ENCODE measurements at regions of chr11 and their contacts with region 1.

Region 1: DNA sequence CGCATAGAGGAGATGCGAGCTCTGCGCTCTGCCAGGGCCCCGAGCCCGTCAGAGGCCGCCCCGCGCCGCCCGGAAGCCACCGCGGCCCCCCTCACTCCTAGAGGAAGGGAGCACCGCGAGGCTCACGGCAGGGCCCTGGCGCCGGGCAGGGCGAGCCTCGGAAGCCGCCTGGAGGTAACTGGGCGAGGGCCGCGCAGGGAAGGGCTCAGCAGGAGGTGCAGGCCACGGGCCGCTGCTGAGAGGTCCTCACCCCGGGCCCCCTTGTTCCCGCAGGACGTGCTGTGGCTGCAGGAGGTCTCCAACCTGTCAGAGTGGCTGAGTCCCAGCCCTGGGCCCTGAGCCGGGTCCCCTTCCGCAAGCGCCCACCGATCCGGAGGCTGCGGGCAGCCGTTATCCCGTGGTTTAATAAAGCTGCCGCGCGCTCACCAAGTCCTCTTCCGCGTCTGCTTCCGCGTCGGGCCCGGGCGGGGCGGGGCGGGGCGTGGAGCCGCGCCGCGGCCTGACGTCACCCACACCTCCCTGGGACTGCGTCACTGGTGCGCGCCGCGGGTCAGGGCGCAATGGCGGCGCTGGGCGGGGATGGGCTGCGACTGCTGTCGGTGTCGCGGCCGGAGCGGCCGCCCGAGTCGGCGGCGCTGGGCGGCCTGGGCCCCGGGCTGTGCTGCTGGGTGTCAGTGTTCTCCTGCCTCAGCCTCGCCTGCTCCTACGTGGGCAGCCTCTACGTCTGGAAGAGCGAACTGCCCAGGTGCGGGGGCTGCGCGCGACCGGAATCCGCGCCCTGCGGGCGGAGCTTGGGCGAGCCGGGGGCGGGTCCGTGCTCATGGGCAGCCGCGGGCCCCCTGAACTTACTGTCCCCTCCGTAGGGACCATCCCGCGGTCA is at the start of gene RCE1:
- DNase-seq: peak; percentile 91
- H3K4me3 ChIP-seq: peak within 1 kb of the TSS; percentile 82 to 98 (median 91)
- H3K27ac ChIP-seq: peak within 1 kb of the TSS; percentile 97 to 99 (median 99)
- H3K4me1 ChIP-seq: peaks cover 18 to 39% (median 24%) of the 10 kb centered on the region in 4 donors
- H3K27me3 ChIP-seq: no peaks in the 10 kb centered on the region
- CTCF ChIP-seq: no peak
- EP300 ChIP-seq: no peak
- POLR2A ChIP-seq: peak; percentile 94
- total RNA-seq, gene RCE1: 14.5 to 40.3 (median 37.4) TPM

Region 2: DNA sequence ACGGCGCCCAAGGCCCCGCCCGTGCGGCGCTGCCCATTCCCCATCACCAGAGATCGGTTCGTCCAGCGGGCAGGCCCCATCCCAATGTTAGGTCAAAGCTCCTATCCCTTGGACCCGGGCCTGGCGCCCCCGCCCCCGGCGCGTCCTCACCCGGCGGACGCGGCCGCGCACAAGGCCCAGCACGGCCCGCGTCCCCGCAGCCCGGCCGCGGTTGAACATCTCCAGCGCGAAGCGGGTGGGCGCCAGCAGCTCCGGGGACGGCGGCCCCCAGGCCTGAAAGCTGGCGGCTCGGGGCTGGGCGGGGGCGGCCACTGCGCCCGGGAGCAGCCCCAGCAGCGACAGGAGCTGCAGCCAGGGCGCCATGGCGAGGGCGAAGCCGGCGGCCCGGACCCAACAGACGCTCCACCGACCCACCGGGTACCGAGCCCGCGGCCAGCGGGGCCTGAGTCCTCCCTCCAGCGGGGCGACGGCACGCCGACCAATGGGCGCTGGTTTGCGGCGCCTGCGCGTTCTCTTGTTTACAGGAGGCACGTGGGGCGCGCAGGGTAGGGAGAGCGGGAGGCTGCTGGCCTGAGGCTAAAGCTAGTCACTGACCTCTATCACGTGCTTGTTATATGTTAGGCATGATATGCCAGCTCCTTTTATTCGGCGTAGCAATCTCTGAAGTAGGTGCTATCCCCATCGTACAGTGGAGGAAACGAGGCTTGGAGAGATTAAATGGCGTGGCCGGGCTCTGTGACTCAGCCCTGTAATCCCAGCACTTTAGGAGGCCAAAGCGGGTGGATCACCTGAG is 274.8 kb before region 1 on chr11 and contains the start of gene CTSF:
- in situ Hi-C with region 1: loop called in 2 of 4 experiments (anchors 10 to 25 kb)
- intact Hi-C with region 1: no loop called
- DNase-seq: peak; percentile 85
- H3K4me3 ChIP-seq: peak within 1 kb of the TSS; percentile 55 to 72 (median 59)
- H3K27ac ChIP-seq: peak within 1 kb of the TSS in 3 of 4 donors; percentile 28 to 72 (median 53)
- H3K4me1 ChIP-seq: peaks cover 5 to 18% (median 13%) of the 10 kb centered on the region in 4 donors
- H3K27me3 ChIP-seq: peaks cover 17% of the 10 kb centered on the region
- CTCF ChIP-seq: no peak
- EP300 ChIP-seq: no peak
- POLR2A ChIP-seq: no peak
- total RNA-seq, gene CTSF: 23.5 to 80.6 (median 39.0) TPM

Region 3: DNA sequence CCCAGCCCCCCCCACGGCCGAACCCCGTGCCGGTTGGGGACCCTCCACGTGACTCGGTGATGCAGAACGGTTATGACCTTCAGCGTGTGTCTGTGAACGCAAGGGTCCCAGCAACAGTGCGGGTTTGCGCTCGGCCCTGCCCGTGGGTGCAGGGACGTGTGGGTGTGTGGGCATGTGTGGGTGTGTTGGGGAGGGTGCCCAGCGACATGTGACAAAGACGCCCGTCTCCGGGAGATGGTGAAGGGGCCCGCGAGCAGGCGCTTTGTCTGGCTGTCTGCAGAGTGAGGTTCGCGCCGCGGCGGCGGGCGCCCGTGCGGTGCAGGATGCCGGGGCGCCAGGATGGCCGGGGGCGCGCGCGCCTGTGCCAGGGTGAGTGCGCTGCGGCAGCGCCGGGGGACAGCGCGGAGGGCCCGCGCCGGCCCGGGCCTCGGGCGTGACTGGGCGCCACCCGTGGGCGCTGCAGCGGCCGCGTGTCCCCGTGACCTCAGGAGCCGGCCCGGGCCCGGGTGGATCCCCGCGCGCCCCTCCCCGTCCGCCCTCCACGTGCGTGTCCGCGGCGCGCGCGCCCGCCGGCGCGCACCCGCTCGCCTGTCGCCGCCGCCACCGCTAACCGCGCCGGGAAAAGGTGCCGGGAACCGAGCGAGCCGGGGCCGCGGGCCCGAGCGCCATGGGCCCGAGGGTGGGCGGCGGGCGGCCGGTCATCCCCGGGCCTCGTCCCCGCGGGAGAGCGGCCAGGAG is 13.5 kb after region 1 on chr11 and contains the start of gene LRFN4:
- in situ Hi-C with region 1: no loop called
- intact Hi-C with region 1: no loop called
- DNase-seq: peak; percentile 59
- H3K4me3 ChIP-seq: peak within 1 kb of the TSS; percentile 55 to 72 (median 57)
- H3K27ac ChIP-seq: peak within 1 kb of the TSS; percentile 89 to 93 (median 91)
- H3K4me1 ChIP-seq: peaks cover 6 to 17% (median 12%) of the 10 kb centered on the region in 4 donors
- H3K27me3 ChIP-seq: no peaks in the 10 kb centered on the region
- CTCF ChIP-seq: no peak
- EP300 ChIP-seq: no peak
- POLR2A ChIP-seq: no peak
- total RNA-seq, gene LRFN4: 14.3 to 52.3 (median 22.6) TPM

Region 4: DNA sequence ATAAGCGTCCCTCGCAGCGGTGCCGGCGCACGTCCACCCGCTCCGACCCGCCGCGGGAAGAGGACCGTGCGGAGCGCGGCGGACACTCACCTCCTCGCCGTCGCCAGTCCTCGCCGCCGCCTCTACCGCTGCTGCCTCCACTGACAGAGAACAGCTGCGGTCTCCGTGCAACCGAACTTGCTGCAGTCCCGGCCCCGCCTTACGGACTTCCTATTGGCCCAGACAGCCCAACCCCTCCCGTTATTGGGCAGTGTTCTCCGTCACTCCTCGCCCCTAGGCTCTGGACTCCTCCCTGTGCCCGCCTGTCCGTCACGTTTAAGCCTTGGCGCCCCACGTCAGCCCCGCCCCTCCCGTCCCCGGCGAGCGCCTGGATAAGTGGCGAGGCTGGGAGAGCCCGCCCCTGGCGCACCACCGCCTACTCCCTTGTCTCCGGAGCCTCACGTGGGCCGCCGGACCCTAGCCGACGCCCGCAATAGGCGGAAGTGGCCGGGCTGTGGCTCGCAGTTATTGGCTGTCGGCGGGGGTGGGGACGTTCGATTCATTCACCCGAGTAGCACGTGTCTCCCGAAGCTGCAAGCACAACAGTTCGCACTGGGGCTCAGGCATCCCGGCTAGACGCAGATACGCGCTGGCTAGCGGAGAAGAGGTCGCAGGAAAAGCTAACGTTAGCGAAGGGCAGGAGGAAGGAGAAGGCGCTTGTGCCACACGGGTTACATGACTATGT is 115.3 kb after region 1 on chr11 and contains the start of gene PC:
- in situ Hi-C with region 1: no loop called
- intact Hi-C with region 1: no loop called
- DNase-seq: peak; percentile 99
- H3K4me3 ChIP-seq: peak within 1 kb of the TSS; percentile 59 to 83 (median 64)
- H3K27ac ChIP-seq: peak within 1 kb of the TSS; percentile 68 to 91 (median 83)
- H3K4me1 ChIP-seq: peaks cover 9 to 32% (median 17%) of the 10 kb centered on the region in 4 donors
- H3K27me3 ChIP-seq: no peaks in the 10 kb centered on the region
- CTCF ChIP-seq: no peak
- EP300 ChIP-seq: no peak
- POLR2A ChIP-seq: peak; percentile 89
- total RNA-seq, gene PC: 14.9 to 246 (median 38.1) TPM

Measured in transverse colon (tissue), 4 donors.